ENCODE measurements at regions of chr4 and their contacts with region 1.

Region 1: GRCh38 chr4:123505095-123506010 is 108.8 kb downstream of the SPRY1 start:
- DNase-seq: peak; percentile 97
- ATAC-seq: peak; percentile 97
- H3K4me3 ChIP-seq: peak overlapping the region; percentile 43 to 65 (median 59)
- H3K27ac ChIP-seq: peak overlapping the region; percentile 97
- H3K4me1 ChIP-seq: peaks cover 48% of the 10 kb centered on the region
- H3K27me3 ChIP-seq: no peaks in the 10 kb centered on the region
- CTCF ChIP-seq: peak; percentile 43; the same call in 1 of the 2 replicates
- EP300 ChIP-seq: peak in 1 of 2 experiments; percentile 90; a peak in 2 of 4 replicates
- POLR2A ChIP-seq: peak; percentile 65 to 69; a peak in 3 of 4 replicates
- RAD21 ChIP-seq: peak; percentile 73

Region 2: DNA sequence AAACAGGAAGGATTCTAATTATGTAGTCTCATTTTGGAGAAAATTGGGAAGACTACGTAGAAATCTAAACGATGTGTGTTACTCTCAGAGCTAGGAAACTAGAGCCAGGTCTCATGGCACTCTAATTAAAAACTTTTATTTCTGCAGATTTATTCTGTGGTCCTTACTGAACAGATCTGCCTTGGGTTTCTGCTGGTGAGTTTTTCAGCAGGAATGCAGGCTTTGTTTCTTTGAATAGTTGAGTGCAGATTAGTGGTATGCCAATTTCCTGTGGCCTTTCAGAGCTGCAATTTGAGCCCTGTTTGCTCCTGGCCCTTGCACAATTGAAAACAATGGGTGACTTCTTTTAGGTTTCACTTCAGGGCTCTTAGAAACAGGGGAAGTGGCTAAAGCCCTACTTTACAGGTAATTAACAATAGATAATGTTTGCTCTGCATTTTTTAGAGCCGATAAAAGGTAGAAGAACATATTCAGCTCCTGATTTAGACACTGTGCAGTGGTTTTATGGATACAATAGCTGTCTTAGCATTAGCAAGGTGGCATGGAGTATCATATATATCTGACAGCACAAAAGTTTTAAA is 86.9 kb before region 1 on chr4:
- CTCF ChIA-PET with region 1: no interaction called
- POLR2A ChIA-PET with region 1: interaction called, 10 read pairs
- in situ Hi-C with region 1: no loop called
- intact Hi-C with region 1: loop called (anchors 1 kb)
- DNase-seq: peak; percentile 97
- ATAC-seq: peak; percentile 97
- H3K4me3 ChIP-seq: peak overlapping the region in 2 of 3 experiments; percentile 6 to 30; a peak in 2 of 6 replicates
- H3K27ac ChIP-seq: peak overlapping the region; percentile 70
- H3K4me1 ChIP-seq: peaks cover 72% of the 10 kb centered on the region
- H3K27me3 ChIP-seq: no peaks in the 10 kb centered on the region
- CTCF ChIP-seq: no peak
- EP300 ChIP-seq: peak in 1 of 2 experiments; percentile 95; a peak in 2 of 4 replicates
- POLR2A ChIP-seq: no peak
- RAD21 ChIP-seq: peak; percentile 21; the same call in 1 of the 2 replicates

Region 3: GRCh38 chr4:123524958-123525628 is 19.7 kb after region 1 on chr4:
- CTCF ChIA-PET with region 1: no interaction called
- POLR2A ChIA-PET with region 1: interaction called, 13 read pairs
- in situ Hi-C with region 1: no loop called
- intact Hi-C with region 1: loop called (anchors 2 kb)
- DNase-seq: peak; percentile 76
- ATAC-seq: peak; percentile 83
- H3K4me3 ChIP-seq: no peak overlapping the region
- H3K27ac ChIP-seq: peak overlapping the region; percentile 24
- H3K4me1 ChIP-seq: peaks cover 38% of the 10 kb centered on the region
- H3K27me3 ChIP-seq: no peaks in the 10 kb centered on the region
- CTCF ChIP-seq: no peak
- EP300 ChIP-seq: peak in 1 of 2 experiments; percentile 68; a peak in 2 of 4 replicates
- POLR2A ChIP-seq: no peak
- RAD21 ChIP-seq: no peak

Region 4: GRCh38 chr4:123555233-123555806 is 50.0 kb after region 1 on chr4:
- CTCF ChIA-PET with region 1: no interaction called
- POLR2A ChIA-PET with region 1: interaction called, 53 read pairs
- in situ Hi-C with region 1: no loop called
- intact Hi-C with region 1: loop called (anchors 1 kb)
- DNase-seq: peak; percentile 98
- ATAC-seq: peak; percentile 97
- H3K4me3 ChIP-seq: peak overlapping the region; percentile 25 to 54 (median 39); a peak in 5 of 6 replicates
- H3K27ac ChIP-seq: peak overlapping the region; percentile 98
- H3K4me1 ChIP-seq: peaks cover 76% of the 10 kb centered on the region
- H3K27me3 ChIP-seq: no peaks in the 10 kb centered on the region
- CTCF ChIP-seq: peak; percentile 8; the same call in 1 of the 2 replicates
- EP300 ChIP-seq: peak; percentile 72 to 99
- POLR2A ChIP-seq: peak in 1 of 2 experiments; percentile 59; a peak in 2 of 4 replicates
- RAD21 ChIP-seq: peak; percentile 50; the same call in 1 of the 2 replicates

Region 5: DNA sequence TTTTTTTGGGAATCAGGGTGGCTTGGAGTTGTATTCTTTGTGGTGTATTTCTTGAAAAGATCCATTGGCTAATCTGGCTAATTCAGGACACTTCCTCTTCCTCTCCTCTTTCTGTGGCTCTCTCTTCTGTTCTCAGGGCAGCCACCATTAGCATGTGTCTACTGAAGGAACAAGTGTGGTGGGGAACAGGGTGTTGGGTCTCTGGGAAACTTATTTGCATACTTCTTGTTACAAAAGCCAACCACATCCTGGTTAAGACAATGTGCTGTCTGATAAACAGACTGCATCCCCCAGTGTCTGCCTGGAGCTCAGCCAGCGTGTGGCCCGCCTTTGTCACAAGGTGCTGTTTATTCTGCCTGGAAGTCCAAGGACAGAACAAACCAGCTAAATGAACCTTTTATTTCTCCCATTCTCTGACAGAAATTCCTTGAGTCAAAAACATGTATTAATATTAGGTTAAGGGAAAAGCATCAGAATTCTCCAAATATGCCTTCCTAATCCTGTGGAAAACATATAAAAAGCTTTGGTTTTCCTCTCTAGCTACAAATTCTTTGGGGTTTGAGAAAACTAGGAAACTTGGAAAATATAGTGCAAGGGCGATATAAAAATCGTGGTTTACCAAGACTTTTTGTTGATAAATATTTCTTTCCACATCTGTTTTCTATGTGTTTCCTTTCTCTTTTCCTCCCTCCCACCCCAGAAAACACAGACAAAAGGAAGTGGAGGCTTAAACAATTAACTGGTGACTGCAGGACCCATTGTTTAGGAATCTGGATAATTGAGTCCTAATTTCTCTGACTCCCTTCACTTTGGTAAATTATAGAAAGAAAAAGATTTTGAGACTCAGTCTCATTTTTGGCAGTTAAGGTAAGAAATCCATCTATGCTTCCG is 94.8 kb after region 1 on chr4:
- CTCF ChIA-PET with region 1: no interaction called
- POLR2A ChIA-PET with region 1: interaction called, 6 read pairs
- in situ Hi-C with region 1: no loop called
- intact Hi-C with region 1: loop called (anchors 2 kb)
- DNase-seq: peak; percentile 98
- ATAC-seq: peak; percentile 92
- H3K4me3 ChIP-seq: peak overlapping the region in 2 of 3 experiments; percentile 34 to 42; a peak in 2 of 6 replicates
- H3K27ac ChIP-seq: peak overlapping the region; percentile 78
- H3K4me1 ChIP-seq: peaks cover 42% of the 10 kb centered on the region
- H3K27me3 ChIP-seq: no peaks in the 10 kb centered on the region
- CTCF ChIP-seq: 0 out of 2 replicates have a peak, but pooled peaks have one; percentile 15
- EP300 ChIP-seq: peak; percentile 83 to 96; a peak in 3 of 4 replicates
- POLR2A ChIP-seq: peak in 1 of 2 experiments; percentile 69; a peak in 2 of 4 replicates
- RAD21 ChIP-seq: no peak